PC-3 (cell line): ENCODE measurements at regions of chr3 and their contacts with region 1.

Region 1: DNA sequence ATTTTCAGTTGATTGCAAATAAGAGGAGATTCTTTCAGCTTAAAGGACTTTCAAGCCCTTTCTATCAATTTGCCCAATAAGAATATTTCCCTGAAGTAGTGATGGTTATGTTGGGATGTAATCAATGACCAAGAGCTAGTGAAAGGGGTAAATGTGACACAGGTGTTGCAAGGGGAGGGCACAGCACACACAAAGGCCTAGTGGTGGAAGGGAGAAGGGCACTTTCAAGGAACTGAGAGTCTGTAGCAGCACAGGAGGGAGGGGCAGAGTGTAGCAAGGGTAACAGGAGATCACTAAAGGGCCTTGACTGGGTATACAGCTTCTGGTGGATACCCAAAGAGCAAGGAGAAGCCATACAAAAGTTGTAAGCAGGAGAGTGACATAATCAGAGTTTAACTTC is 217.8 kb upstream of the ARHGEF26 start:
- DNase-seq: no peak
- ATAC-seq: no peak
- H3K4me3 ChIP-seq: no peak overlapping the region
- H3K27ac ChIP-seq: no peak overlapping the region
- H3K4me1 ChIP-seq: peaks cover 27% of the 10 kb centered on the region
- H3K27me3 ChIP-seq: no peaks in the 10 kb centered on the region
- CTCF ChIP-seq: peak; percentile 31; the same call in 1 of the 2 replicates

Region 2: GRCh38 chr3:153835540-153835939 is 67.9 kb before region 1 on chr3:
- CTCF ChIA-PET with region 1: interaction called, 3 read pairs
- POLR2A ChIA-PET with region 1: no interaction called
- intact Hi-C with region 1: loop called (anchors 5 kb)
- DNase-seq: peak; percentile 32
- ATAC-seq: peak; percentile 33; the same call in 1 of the 2 replicates
- H3K4me3 ChIP-seq: no peak overlapping the region
- H3K27ac ChIP-seq: no peak overlapping the region
- H3K4me1 ChIP-seq: peaks cover 10% of the 10 kb centered on the region
- H3K27me3 ChIP-seq: no peaks in the 10 kb centered on the region
- CTCF ChIP-seq: peak; percentile 52